ENCODE measurements at regions of chr17 and their contacts with region 1.

Region 1: GRCh38 chr17:19362277-19363113 is at the start of gene B9D1:
- DNase-seq: peak; percentile 91
- H3K4me3 ChIP-seq: peak within 1 kb of the TSS; percentile 61 to 69
- H3K27ac ChIP-seq: peak within 1 kb of the TSS; percentile 86 to 87
- H3K4me1 ChIP-seq: no peaks in the 10 kb centered on the region
- H3K27me3 ChIP-seq: no peaks in the 10 kb centered on the region
- CTCF ChIP-seq: peak; percentile 98 to 100 (median 100)
- POLR2A ChIP-seq: no peak
- total RNA-seq, gene B9D1: 15.7 to 28.8 TPM

Region 2: GRCh38 chr17:19377602-19378392 is 15.3 kb after region 1 on chr17:
- intact Hi-C with region 1: loop called (anchors 2 kb)
- DNase-seq: peak; percentile 98
- H3K4me3 ChIP-seq: peak overlapping the region; percentile 64 to 68
- H3K27ac ChIP-seq: peak overlapping the region; percentile 90
- H3K4me1 ChIP-seq: peaks cover 12% of the 10 kb centered on the region
- H3K27me3 ChIP-seq: no peaks in the 10 kb centered on the region
- CTCF ChIP-seq: peak in 1 of 4 experiments; percentile 19
- POLR2A ChIP-seq: peak; percentile 56

Region 3: DNA sequence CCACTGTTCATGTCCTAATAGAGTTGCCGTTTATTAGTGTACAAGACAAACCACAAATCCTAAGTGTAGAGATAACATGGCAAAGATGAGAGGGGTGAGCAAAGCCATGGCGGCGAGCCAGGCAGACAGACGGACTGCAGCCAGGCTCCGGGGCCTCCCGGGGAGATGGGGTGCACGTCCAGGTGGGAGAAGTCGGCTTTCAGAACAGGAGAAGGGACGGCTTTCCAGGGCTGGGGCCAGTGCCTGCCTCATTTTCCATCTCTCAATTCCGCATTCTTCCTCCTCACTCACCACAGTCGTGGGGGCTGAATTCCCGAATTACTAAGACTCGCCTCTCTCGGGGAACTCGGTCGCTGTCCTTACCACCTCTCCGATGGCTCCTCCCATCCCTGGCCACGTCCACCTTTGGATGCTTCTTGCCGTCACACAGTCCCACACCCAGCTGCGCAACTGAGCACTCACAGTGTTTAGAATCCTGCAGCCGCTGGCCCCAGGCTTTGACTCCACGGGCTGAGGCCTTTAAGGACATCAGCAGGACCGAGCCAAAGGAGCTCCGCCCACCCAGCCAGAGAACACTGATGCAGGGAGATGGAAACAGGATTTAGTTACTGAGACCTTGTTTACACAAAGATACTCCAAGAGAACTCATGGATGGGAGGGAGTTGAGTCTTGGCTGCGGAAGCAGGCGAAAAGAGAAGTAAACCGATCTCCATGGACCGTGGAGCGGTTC is 108.2 kb after region 1 on chr17:
- intact Hi-C with region 1: no loop called
- DNase-seq: peak; percentile 14
- H3K4me3 ChIP-seq: no peak overlapping the region
- H3K27ac ChIP-seq: peak overlapping the region; percentile 54 to 70
- H3K4me1 ChIP-seq: no peaks in the 10 kb centered on the region
- H3K27me3 ChIP-seq: no peaks in the 10 kb centered on the region
- CTCF ChIP-seq: no peak
- POLR2A ChIP-seq: no peak

Region 4: GRCh38 chr17:19507775-19508576 is 145.5 kb after region 1 on chr17:
- intact Hi-C with region 1: loop called (anchors 5 kb)
- DNase-seq: peak; percentile 91
- H3K4me3 ChIP-seq: peak overlapping the region; percentile 63 to 75
- H3K27ac ChIP-seq: peak overlapping the region; percentile 89 to 94
- H3K4me1 ChIP-seq: no peaks in the 10 kb centered on the region
- H3K27me3 ChIP-seq: no peaks in the 10 kb centered on the region
- CTCF ChIP-seq: peak in 2 of 4 experiments; percentile 15 to 16
- POLR2A ChIP-seq: peak; percentile 17

Region 5: DNA sequence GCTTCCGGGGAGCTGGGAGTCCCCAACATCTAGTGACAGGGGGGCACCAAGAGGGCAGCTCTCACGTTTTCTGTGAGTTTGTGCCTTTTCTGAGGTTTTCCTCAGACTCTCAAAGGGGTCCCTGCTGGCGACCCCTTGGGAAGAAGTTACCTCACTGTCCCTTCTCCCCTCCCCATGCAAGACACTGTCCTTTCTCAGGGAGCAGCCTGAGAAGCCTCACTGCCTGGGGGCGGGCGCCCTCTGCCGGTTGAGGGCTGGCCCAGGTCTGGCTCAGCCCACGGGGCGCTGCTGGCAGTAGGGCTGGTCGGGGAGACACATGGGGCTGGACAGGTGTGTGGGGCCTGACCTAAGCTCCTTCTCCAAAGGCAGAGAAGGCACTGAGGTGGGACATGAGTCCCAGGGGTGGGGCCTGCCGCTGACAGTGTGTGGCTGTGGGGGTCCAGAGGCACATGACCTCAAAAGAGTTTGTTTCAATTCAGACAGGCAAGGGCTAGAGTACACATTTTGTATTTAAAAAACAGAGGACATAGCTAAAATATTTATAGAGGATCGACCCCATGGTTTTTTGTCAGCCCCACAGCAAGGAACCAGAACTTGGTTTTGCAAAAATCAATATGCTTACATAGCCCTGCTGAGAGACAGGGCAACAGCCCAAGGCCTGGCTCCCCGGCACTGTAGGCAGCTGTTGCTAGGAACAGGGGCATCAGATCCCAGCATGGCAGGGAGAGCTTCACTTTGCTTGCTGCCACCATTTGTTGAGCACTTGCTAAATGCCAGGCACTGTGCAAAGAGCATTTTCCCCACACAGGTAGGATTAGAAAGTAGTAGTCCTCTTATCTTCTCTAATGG is 404.2 kb after region 1 on chr17:
- intact Hi-C with region 1: loop called (anchors 5 kb)
- DNase-seq: peak; percentile 61
- H3K4me3 ChIP-seq: no peak overlapping the region
- H3K27ac ChIP-seq: no peak overlapping the region
- H3K4me1 ChIP-seq: no peaks in the 10 kb centered on the region
- H3K27me3 ChIP-seq: no peaks in the 10 kb centered on the region
- CTCF ChIP-seq: peak; percentile 73 to 95 (median 91)
- POLR2A ChIP-seq: no peak

Measured in prostate gland (tissue), 2 donors.